Activated T-helper 2 cell treated with anti-CD3 and anti-CD28 coated beads, Interferon-gamma antibody, Interleukin-2, Interleukin-4, amounts not matched to agents 10 μg/mL and 5 μg/mL and 100 μg/mL, durations not matched to agents 14 hours and 24 hours and 36 hours (primary cell): ENCODE measurements at regions of chr13 and their contacts with region 1.

Region 1: DNA sequence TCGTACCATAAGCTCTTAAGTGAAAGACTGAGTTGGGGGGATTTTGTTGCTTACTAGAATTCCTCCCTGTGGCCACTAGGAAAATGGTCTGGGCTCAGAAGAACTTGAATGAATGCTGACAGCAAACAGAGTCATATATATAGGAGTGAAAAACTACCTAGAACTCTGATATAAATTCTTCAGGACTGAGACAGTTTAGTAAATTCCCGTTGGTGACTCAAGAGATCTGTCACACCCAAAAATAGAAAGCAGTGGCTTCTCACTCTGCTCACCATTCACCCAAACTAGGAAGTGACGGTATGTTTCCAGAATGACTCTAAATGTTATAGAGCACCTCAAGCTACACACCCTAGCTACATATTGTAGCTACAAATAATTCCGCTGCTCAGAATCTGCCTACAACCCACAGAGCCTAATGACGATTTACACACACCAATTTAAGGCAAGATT is 116.2 kb downstream of the TBC1D4 start:
- DNase-seq: peak; percentile 22
- H3K4me3 Mint-ChIP-seq: peak overlapping the region; percentile 59
- H3K27ac Mint-ChIP-seq: peak overlapping the region; percentile 95
- H3K4me1 Mint-ChIP-seq: peaks cover 46% of the 10 kb centered on the region
- H3K27me3 Mint-ChIP-seq: no peaks in the 10 kb centered on the region

Region 2: GRCh38 chr13:75319254-75319653 is 46.5 kb before region 1 on chr13:
- intact Hi-C with region 1: loop called (anchors 2 kb)
- DNase-seq: no peak
- H3K4me3 Mint-ChIP-seq: peak overlapping the region; percentile 30
- H3K27ac Mint-ChIP-seq: peak overlapping the region; percentile 92
- H3K4me1 Mint-ChIP-seq: peaks cover 65% of the 10 kb centered on the region
- H3K27me3 Mint-ChIP-seq: no peaks in the 10 kb centered on the region